Calu3 (cell line): ENCODE measurements at regions of chr6 and their contacts with region 1.

Region 1: GRCh38 chr6:77492530-77492929 is 29.2 kb upstream of the HTR1B start:
- DNase-seq: peak; percentile 40
- H3K4me3 Mint-ChIP-seq: no peak overlapping the region
- H3K27ac Mint-ChIP-seq: no peak overlapping the region
- H3K4me1 Mint-ChIP-seq: peaks cover 20% of the 10 kb centered on the region
- H3K27me3 Mint-ChIP-seq: no peaks in the 10 kb centered on the region
- CTCF ChIP-seq: no peak

Region 2: DNA sequence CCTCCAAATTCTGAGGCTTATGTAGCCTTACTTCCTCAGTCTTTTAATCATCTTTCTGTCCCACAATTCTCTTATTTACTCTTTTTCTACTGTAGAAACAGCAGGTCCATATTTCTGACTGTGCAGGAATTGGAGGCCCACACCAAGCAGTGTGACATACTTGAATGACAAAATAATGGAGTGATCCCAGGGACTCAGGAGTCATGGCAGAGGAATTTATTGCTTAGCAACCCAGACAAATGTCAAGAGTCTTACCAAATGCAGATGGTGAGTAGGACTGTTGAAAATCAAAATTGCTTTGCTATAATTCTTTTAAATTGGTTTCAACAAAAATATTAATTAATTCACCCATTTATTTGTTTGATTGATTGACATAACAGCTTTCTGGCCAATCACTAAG is 89.1 kb before region 1 on chr6:
- CTCF ChIA-PET with region 1: no interaction called
- intact Hi-C with region 1: no loop called
- DNase-seq: no peak
- H3K4me3 Mint-ChIP-seq: no peak overlapping the region
- H3K27ac Mint-ChIP-seq: no peak overlapping the region
- H3K4me1 Mint-ChIP-seq: no peaks in the 10 kb centered on the region
- H3K27me3 Mint-ChIP-seq: no peaks in the 10 kb centered on the region
- CTCF ChIP-seq: no peak

Region 3: GRCh38 chr6:77650098-77650663 is 157.7 kb after region 1 on chr6:
- CTCF ChIA-PET with region 1: no interaction called
- intact Hi-C with region 1: loop called (anchors 10 kb)
- DNase-seq: peak; percentile 64
- H3K4me3 Mint-ChIP-seq: peak overlapping the region; percentile 59
- H3K27ac Mint-ChIP-seq: no peak overlapping the region
- H3K4me1 Mint-ChIP-seq: no peaks in the 10 kb centered on the region
- H3K27me3 Mint-ChIP-seq: no peaks in the 10 kb centered on the region
- CTCF ChIP-seq: peak; percentile 18